ENCODE measurements at regions of chr7 and their contacts with region 1.

Region 1: GRCh38 chr7:64625114-64626082 is 40.5 kb upstream of the ZNF107 start:
- DNase-seq: peak in 3 of 9 experiments; percentile 7 to 51 (median 46)
- ATAC-seq: no peak
- H3K4me3 ChIP-seq: no peak overlapping the region
- H3K4me3 Mint-ChIP-seq: no peak overlapping the region
- H3K27ac ChIP-seq: no peak overlapping the region
- H3K27ac Mint-ChIP-seq: no peak overlapping the region
- H3K4me1 ChIP-seq: no peaks in the 10 kb centered on the region
- H3K4me1 Mint-ChIP-seq: no peaks in the 10 kb centered on the region
- H3K27me3 ChIP-seq: no peaks in the 10 kb centered on the region
- H3K27me3 Mint-ChIP-seq: no peaks in the 10 kb centered on the region
- CTCF ChIP-seq: peak; percentile 88

Region 2: GRCh38 chr7:64183126-64183742 is 442.2 kb before region 1 on chr7:
- CTCF ChIA-PET with region 1: interaction called, 23 read pairs
- POLR2A ChIA-PET with region 1: no interaction called
- intact Hi-C with region 1: no loop called
- DNase-seq: peak in 7 of 9 experiments; percentile 11 to 62 (median 45)
- ATAC-seq: no peak
- H3K4me3 ChIP-seq: no peak overlapping the region
- H3K4me3 Mint-ChIP-seq: no peak overlapping the region
- H3K27ac ChIP-seq: no peak overlapping the region
- H3K27ac Mint-ChIP-seq: no peak overlapping the region
- H3K4me1 ChIP-seq: no peaks in the 10 kb centered on the region
- H3K4me1 Mint-ChIP-seq: no peaks in the 10 kb centered on the region
- H3K27me3 ChIP-seq: no peaks in the 10 kb centered on the region
- H3K27me3 Mint-ChIP-seq: no peaks in the 10 kb centered on the region
- CTCF ChIP-seq: peak; percentile 55

Region 3: GRCh38 chr7:64602518-64602917 is 22.9 kb before region 1 on chr7:
- CTCF ChIA-PET with region 1: no interaction called
- POLR2A ChIA-PET with region 1: no interaction called
- intact Hi-C with region 1: no loop called
- DNase-seq: no peak
- ATAC-seq: no peak
- H3K4me3 ChIP-seq: no peak overlapping the region
- H3K4me3 Mint-ChIP-seq: no peak overlapping the region
- H3K27ac ChIP-seq: no peak overlapping the region
- H3K27ac Mint-ChIP-seq: no peak overlapping the region
- H3K4me1 ChIP-seq: no peaks in the 10 kb centered on the region
- H3K4me1 Mint-ChIP-seq: no peaks in the 10 kb centered on the region
- H3K27me3 ChIP-seq: no peaks in the 10 kb centered on the region
- H3K27me3 Mint-ChIP-seq: no peaks in the 10 kb centered on the region
- CTCF ChIP-seq: no peak

Measured in CD8-positive, alpha-beta T cell (primary cell).